OCI-LY7 (cell line): ENCODE measurements at regions of chr17 and their contacts with region 1.

Region 1: GRCh38 chr17:47205419-47205963 is 3.7 kb upstream of the MYL4 start:
- DNase-seq: peak; percentile 90
- H3K4me3 ChIP-seq: peak overlapping the region; percentile 57
- H3K27ac ChIP-seq: peak overlapping the region; percentile 98
- H3K4me1 ChIP-seq: peaks cover 85% of the 10 kb centered on the region
- CTCF ChIP-seq: no peak

Region 2: DNA sequence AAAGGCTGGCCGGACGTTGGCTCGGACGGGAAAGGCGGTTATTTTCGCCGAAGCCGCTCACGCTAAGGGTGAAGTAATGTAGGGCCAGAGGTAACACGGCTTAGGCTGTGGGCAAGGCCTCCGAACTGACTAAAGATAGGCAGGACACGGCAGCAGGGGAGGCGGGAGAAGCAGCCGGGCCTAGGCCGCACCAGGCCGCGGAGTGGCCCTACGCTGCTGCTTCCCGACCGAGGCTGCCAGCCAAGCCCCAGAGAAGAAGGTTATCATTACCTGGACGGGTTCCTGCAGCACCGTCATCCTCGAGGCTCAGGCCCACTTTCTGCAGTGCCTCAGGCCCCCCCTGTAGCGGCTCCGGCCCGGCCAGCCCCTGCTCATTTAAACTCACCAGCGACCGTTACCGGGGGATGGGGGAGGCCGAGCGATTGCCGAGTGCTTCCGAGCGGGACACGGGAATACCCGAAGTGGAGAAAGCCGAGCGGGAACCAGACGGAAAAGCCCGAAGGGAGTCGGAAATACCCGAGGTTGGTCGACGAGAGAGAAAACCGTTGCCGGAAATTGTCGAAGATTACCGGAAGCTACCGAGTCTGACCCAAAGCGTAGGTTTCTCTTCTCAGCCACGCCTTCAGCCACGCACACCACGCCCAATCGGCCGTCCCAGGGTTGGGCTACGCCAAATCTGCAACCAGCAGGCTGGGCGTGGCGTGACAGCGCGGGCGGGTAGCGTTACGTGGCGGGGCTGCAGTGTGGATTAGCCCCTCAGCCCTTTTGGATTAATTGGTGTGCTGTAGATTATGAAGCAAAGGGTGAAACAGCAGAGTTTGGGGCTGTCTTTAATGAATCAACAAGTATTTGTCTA is 16.4 kb before region 1 on chr17 and contains the start of gene CDC27:
- CTCF ChIA-PET with region 1: interaction called, 3 read pairs
- POLR2A ChIA-PET with region 1: interaction called, 114 read pairs
- intact Hi-C with region 1: loop called (anchors 1 kb)
- DNase-seq: peak; percentile 100
- H3K4me3 ChIP-seq: peak within 1 kb of the TSS; percentile 82
- H3K27ac ChIP-seq: peak within 1 kb of the TSS; percentile 78
- H3K4me1 ChIP-seq: peaks cover 62% of the 10 kb centered on the region
- CTCF ChIP-seq: no peak
- total RNA-seq, gene CDC27: 74.3 and 83.4 TPM in 2 replicates

Region 3: DNA sequence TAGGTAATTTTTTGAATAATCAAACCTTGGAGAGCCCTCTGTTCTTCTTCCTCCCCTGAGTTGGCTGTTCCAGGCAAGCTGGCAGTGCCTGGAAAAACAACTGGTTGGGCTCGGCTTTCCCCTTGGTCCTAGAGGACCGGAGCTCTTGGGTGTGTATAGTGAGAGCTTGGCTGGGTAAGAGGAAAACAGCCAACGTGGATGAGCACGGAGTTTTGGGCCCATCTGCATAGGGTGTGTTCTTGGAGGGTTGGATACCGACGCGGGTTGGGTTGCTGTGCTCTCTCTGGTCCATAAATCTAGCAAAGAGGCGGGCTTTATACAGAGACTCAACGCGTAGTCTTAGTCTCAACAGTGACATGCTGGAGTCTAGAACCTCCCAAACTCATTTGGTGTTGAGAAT is 71.4 kb after region 1 on chr17:
- CTCF ChIA-PET with region 1: no interaction called
- POLR2A ChIA-PET with region 1: no interaction called
- intact Hi-C with region 1: no loop called
- DNase-seq: no peak
- H3K4me3 ChIP-seq: no peak overlapping the region
- H3K27ac ChIP-seq: no peak overlapping the region
- H3K4me1 ChIP-seq: peaks cover 34% of the 10 kb centered on the region
- CTCF ChIP-seq: no peak